Endothelial cell of umbilical vein (primary cell): ENCODE measurements at regions of chr5 and their contacts with region 1.

Region 1: DNA sequence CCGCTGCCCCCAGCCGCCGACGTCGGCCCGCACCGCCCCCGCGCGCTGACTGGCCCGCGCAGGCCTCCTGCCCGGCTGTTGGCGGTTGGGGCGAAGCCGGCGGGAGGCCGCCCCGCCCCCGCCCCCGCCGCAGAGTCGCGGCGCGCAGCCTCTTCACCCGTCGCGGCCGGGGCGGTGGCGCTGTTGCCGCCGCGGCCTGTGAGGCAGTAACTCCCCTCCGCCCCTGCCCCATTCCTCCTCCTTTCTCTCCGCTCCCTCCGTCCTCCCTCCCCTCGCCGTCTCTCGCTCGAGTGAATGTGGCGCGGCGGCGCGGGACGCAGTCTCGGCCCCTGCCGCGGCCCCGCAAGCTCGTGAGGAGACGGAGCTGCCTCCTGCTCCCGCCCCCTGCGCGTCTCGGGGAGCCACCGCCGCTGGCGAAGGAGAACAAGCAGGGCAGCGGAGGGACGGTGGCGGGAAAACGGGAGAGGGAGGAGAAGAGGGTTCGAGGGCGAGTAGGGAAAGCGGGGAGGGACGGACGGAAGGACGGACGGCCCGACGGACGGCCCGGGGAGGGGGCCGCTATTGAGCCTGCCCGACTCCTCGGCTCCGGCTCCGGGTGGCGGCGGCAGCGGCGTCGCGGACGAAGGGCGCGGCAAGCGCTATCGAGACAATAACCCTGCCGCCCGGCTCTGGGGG is 637 bp upstream of the ERBIN start:
- DNase-seq: peak; percentile 88
- H3K4me3 ChIP-seq: peak overlapping the region; percentile 89 to 100 (median 99)
- H3K27ac ChIP-seq: peak overlapping the region; percentile 96
- H3K4me1 ChIP-seq: peaks cover 20% of the 10 kb centered on the region
- H3K27me3 ChIP-seq: no peaks in the 10 kb centered on the region
- CTCF ChIP-seq: peak; percentile 20 to 42
- POLR2A ChIP-seq: peak; percentile 55

Region 2: GRCh38 chr5:65624571-65625555 is 300.9 kb before region 1 on chr5 and contains the starts of genes SHLD3 and TRAPPC13:
- CTCF ChIA-PET with region 1: no interaction called
- POLR2A ChIA-PET with region 1: no interaction called
- dilution Hi-C with region 1: no loop called
- intact Hi-C with region 1: loop called (anchors 10 kb)
- DNase-seq: peak; percentile 92
- H3K4me3 ChIP-seq: peak within 1 kb of the TSS; percentile 76 to 97 (median 92)
- H3K27ac ChIP-seq: peak within 1 kb of the TSS; percentile 84
- H3K4me1 ChIP-seq: peaks cover 19% of the 10 kb centered on the region
- H3K27me3 ChIP-seq: no peaks in the 10 kb centered on the region
- CTCF ChIP-seq: no peak
- POLR2A ChIP-seq: peak; percentile 56
- total RNA-seq, gene SHLD3: 3.6 TPM in 2 replicates
- total RNA-seq, gene TRAPPC13: 16.4 and 24.0 TPM in 2 replicates

Region 3: GRCh38 chr5:65708145-65708544 is 217.6 kb before region 1 on chr5:
- CTCF ChIA-PET with region 1: no interaction called
- POLR2A ChIA-PET with region 1: no interaction called
- dilution Hi-C with region 1: no loop called
- intact Hi-C with region 1: no loop called
- DNase-seq: no peak
- H3K4me3 ChIP-seq: no peak overlapping the region
- H3K27ac ChIP-seq: no peak overlapping the region
- H3K4me1 ChIP-seq: no peaks in the 10 kb centered on the region
- H3K27me3 ChIP-seq: no peaks in the 10 kb centered on the region
- CTCF ChIP-seq: no peak
- POLR2A ChIP-seq: no peak

Region 4: GRCh38 chr5:65742565-65743231 is 183.0 kb before region 1 on chr5:
- CTCF ChIA-PET with region 1: interaction called, 4 read pairs
- POLR2A ChIA-PET with region 1: no interaction called
- dilution Hi-C with region 1: no loop called
- intact Hi-C with region 1: loop called (anchors 5 kb)
- DNase-seq: peak; percentile 74
- H3K4me3 ChIP-seq: no peak overlapping the region
- H3K27ac ChIP-seq: peak overlapping the region; percentile 24
- H3K4me1 ChIP-seq: peaks cover 6% of the 10 kb centered on the region
- H3K27me3 ChIP-seq: no peaks in the 10 kb centered on the region
- CTCF ChIP-seq: peak; percentile 40 to 50
- POLR2A ChIP-seq: no peak

Region 5: DNA sequence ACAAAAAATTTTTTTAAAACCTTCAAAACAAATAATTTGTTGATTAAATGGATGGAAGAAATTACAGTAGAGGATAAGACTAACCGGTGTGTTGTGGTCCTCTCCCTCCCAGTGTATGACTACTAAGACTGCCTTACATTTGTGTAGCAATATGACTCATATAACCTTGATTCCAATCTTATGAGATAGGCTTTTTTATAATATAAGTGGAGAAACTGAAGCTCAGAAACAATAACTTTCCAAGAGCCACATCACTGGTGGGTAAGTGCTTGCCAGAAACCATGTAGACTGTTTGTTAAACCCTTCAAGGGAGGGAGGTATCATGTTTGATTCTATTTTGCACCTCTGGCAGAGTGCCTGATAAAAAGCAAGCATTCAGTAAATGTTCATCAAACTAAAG is 156.2 kb before region 1 on chr5:
- CTCF ChIA-PET with region 1: no interaction called
- POLR2A ChIA-PET with region 1: no interaction called
- dilution Hi-C with region 1: no loop called
- intact Hi-C with region 1: loop called (anchors 2 kb)
- DNase-seq: peak; percentile 74
- H3K4me3 ChIP-seq: no peak overlapping the region
- H3K27ac ChIP-seq: peak overlapping the region; percentile 35
- H3K4me1 ChIP-seq: peaks cover 12% of the 10 kb centered on the region
- H3K27me3 ChIP-seq: no peaks in the 10 kb centered on the region
- CTCF ChIP-seq: no peak
- POLR2A ChIP-seq: no peak

Region 6: DNA sequence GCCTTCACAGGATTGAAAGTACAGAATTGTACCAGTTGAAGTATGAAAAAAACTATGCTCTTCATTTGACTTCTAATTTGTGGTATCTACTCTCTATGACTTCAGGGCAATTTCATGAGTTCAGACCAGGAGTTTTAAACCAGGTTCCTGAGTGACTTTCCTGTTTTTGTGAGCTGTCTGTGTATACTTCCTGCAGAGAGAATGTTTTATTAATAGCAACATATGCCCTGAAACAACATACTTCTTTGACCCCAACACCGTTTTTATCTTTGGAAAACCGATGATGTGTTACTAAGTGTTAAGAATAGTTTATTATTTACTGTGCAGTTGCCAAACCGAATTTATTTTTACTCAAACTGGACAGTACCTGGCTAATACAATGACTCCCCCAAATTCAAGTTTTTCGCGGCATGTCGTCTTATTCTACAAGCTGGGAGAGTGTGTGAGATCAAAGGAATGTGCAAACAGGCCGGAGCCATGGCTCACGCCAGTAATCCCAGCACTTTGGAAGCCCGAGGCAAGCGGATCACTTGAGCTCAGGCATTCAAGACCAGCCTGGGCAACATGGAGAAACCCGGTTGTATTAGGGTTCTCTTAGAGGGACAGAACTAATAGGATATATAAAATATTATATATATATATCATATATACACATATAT is 58.1 kb before region 1 on chr5:
- CTCF ChIA-PET with region 1: no interaction called
- POLR2A ChIA-PET with region 1: no interaction called
- dilution Hi-C with region 1: no loop called
- intact Hi-C with region 1: loop called (anchors 1 kb)
- DNase-seq: peak; percentile 75
- H3K4me3 ChIP-seq: no peak overlapping the region
- H3K27ac ChIP-seq: peak overlapping the region; percentile 80
- H3K4me1 ChIP-seq: peaks cover 11% of the 10 kb centered on the region
- H3K27me3 ChIP-seq: no peaks in the 10 kb centered on the region
- CTCF ChIP-seq: no peak
- POLR2A ChIP-seq: no peak

Region 7: DNA sequence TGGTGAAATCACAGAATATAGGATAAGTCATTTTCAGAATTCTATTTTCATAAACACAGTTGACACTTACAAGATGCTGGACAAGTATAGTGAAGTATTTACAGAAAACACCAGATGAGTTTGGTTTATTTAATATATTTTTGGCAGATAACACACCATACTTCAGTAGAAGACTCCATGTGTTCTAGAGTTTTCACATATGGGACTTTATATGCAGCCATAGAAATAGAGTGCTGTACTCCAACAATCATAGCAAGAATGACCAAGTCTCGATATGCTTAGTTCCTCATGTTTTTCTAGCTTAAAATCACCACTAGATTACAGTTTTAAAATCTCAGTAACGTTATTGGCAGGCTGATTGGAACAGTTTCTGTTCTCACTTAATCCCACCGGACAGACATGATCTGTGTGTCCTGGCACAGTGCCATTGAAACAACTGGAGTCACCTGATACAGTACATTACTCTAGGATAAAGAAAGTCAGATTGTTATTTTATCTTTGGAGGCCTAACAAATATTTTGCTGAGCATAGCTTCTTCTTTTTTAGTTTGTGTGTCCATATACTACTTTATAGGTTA is 45.2 kb before region 1 on chr5:
- CTCF ChIA-PET with region 1: no interaction called
- POLR2A ChIA-PET with region 1: no interaction called
- dilution Hi-C with region 1: no loop called
- intact Hi-C with region 1: loop called (anchors 5 kb)
- DNase-seq: no peak
- H3K4me3 ChIP-seq: no peak overlapping the region
- H3K27ac ChIP-seq: no peak overlapping the region
- H3K4me1 ChIP-seq: no peaks in the 10 kb centered on the region
- H3K27me3 ChIP-seq: no peaks in the 10 kb centered on the region
- CTCF ChIP-seq: no peak
- POLR2A ChIP-seq: no peak

Region 8: DNA sequence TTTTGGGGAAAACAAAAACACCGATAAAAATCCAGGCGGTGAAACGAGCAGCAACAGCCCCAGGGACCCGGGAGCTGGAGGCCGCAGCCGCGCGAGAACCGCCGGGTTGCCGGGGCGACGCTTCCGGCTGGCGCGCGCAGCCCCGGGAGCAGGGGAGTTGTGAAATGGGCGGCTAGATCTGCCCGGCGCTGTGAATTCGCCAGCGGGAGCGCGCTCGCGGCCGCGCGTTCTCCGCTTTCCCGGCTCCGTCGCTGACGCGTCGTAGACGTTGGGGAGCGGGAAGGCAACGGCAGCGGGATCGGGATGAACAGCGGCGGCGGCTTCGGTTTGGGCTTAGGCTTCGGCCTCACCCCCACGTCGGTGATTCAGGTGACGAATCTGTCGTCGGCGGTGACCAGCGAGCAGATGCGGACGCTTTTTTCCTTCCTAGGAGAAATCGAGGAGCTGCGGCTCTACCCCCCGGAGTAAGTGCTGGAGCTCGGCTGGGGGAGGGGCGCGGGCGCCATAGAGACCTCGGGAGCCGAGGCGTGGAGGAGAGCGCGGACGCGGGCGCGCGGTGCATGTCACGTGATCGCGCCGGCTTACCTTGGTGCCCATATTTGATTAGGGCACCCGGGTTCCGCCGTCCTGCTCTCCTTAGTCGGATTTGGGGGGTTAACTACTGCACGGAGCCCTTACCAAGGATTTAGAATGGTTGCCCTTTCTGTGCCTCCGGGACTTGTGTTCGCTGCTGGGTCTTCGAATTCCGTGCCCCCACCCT is 218.5 kb after region 1 on chr5 and contains the start of gene SREK1:
- CTCF ChIA-PET with region 1: no interaction called
- POLR2A ChIA-PET with region 1: interaction called, 3 read pairs
- dilution Hi-C with region 1: no loop called
- intact Hi-C with region 1: loop called (anchors 1 kb)
- DNase-seq: peak; percentile 95
- H3K4me3 ChIP-seq: peak within 1 kb of the TSS; percentile 74 to 98 (median 77)
- H3K27ac ChIP-seq: peak within 1 kb of the TSS; percentile 93
- H3K4me1 ChIP-seq: peaks cover 16% of the 10 kb centered on the region
- H3K27me3 ChIP-seq: peaks cover 2 to 6% of the 10 kb centered on the region in 2 experiments
- CTCF ChIP-seq: no peak
- POLR2A ChIP-seq: peak; percentile 86
- total RNA-seq, gene SREK1: 72.9 and 78.6 TPM in 2 replicates